B cell (primary cell): ENCODE measurements at regions of chr16 and their contacts with region 1.

Region 1: GRCh38 chr16:84617791-84618580 is at the start of gene COTL1:
- DNase-seq: peak; percentile 96
- ATAC-seq: peak; percentile 88
- H3K4me3 ChIP-seq: peak within 1 kb of the TSS; percentile 73 to 96 (median 85)
- H3K4me3 Mint-ChIP-seq: peak within 1 kb of the TSS; percentile 88
- H3K27ac ChIP-seq: peak within 1 kb of the TSS; percentile 4 to 72
- H3K27ac Mint-ChIP-seq: peak within 1 kb of the TSS; percentile 90
- H3K4me1 ChIP-seq: peaks cover 51 to 67% of the 10 kb centered on the region in 2 donors
- H3K4me1 Mint-ChIP-seq: peaks cover 72% of the 10 kb centered on the region
- H3K27me3 ChIP-seq: no peaks in the 10 kb centered on the region
- H3K27me3 Mint-ChIP-seq: no peaks in the 10 kb centered on the region
- CTCF ChIP-seq: no peak
- total RNA-seq, gene COTL1: 245 and 264 TPM in 2 replicates

Region 2: DNA sequence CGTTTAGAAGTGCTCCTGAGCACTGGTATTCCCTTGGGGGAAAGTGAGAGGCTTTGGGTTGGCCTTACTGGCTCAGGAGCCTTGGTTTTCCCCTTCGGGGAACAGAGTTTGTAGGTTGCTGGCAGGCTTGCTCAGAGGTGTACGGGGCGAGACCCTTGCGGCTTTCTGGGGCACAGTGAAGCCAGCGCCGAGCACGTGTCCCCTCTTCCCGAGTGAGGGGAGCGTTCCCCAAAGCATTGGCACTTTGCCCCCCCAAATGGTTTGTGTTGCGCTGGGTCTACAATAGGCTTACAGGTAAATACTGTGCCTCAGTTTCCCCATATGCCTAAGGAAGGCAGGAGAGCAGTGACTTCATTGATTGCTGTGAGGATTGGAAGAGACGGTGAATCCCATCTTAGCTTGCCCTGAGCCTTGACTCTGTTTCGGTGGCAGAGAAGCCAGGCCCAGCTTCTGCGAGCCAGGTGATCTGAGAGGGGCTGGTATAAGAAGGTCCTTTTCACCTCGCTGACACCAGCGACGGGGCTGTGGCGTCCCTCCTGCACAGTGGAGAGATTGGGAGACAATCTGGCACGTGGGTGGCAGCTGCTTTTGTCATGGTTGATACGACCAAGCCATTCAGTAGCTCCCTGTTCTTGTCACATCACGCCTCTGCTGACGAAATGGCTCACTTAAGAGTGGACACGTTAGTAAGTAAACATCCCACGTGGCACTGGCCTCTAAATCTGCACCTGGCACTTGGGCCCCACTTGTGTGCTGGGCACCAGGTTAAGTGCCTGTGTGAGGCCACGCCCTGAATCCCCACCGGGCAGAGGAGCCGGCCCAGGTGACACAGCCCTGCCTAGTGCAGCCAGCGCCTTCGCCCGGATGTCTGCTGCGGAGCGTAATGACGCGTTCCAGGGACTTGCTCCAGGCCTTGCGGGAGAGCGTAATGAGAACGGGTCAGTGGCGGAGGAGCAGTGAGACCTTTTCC is 168.5 kb before region 1 on chr16:
- CTCF ChIA-PET with region 1: no interaction called
- POLR2A ChIA-PET with region 1: no interaction called
- intact Hi-C with region 1: no loop called
- DNase-seq: no peak
- ATAC-seq: no peak
- H3K4me3 ChIP-seq: no peak overlapping the region
- H3K4me3 Mint-ChIP-seq: no peak overlapping the region
- H3K27ac ChIP-seq: no peak overlapping the region
- H3K27ac Mint-ChIP-seq: no peak overlapping the region
- H3K4me1 ChIP-seq: no peaks in the 10 kb centered on the region
- H3K4me1 Mint-ChIP-seq: no peaks in the 10 kb centered on the region
- H3K27me3 ChIP-seq: peaks cover 0 to 7% (median 1%) of the 10 kb centered on the region in 4 experiments
- H3K27me3 Mint-ChIP-seq: peaks cover 11% of the 10 kb centered on the region
- CTCF ChIP-seq: no peak

Region 3: GRCh38 chr16:84526794-84527503 is 91.0 kb before region 1 on chr16:
- CTCF ChIA-PET with region 1: interaction called, 17 read pairs
- POLR2A ChIA-PET with region 1: no interaction called
- intact Hi-C with region 1: no loop called
- DNase-seq: no peak
- ATAC-seq: no peak
- H3K4me3 ChIP-seq: no peak overlapping the region
- H3K4me3 Mint-ChIP-seq: no peak overlapping the region
- H3K27ac ChIP-seq: no peak overlapping the region
- H3K27ac Mint-ChIP-seq: no peak overlapping the region
- H3K4me1 ChIP-seq: peaks cover under 1 to 4% of the 10 kb centered on the region in 2 donors
- H3K4me1 Mint-ChIP-seq: peaks cover 3% of the 10 kb centered on the region
- H3K27me3 ChIP-seq: peaks cover 0 to 2% (median 0%) of the 10 kb centered on the region in 4 experiments
- H3K27me3 Mint-ChIP-seq: no peaks in the 10 kb centered on the region
- CTCF ChIP-seq: no peak

Region 4: GRCh38 chr16:84593825-84594724 is 23.9 kb before region 1 on chr16:
- CTCF ChIA-PET with region 1: interaction called, 42 read pairs
- POLR2A ChIA-PET with region 1: interaction called, 14 read pairs
- intact Hi-C with region 1: loop called (anchors 1 kb)
- DNase-seq: peak; percentile 94
- ATAC-seq: peak; percentile 85
- H3K4me3 ChIP-seq: peak overlapping the region; percentile 41 to 69 (median 52)
- H3K4me3 Mint-ChIP-seq: peak overlapping the region; percentile 92
- H3K27ac ChIP-seq: peak overlapping the region; percentile 91 to 94
- H3K27ac Mint-ChIP-seq: peak overlapping the region; percentile 94
- H3K4me1 ChIP-seq: peaks cover 62 to 87% of the 10 kb centered on the region in 2 donors
- H3K4me1 Mint-ChIP-seq: peaks cover 72% of the 10 kb centered on the region
- H3K27me3 ChIP-seq: no peaks in the 10 kb centered on the region
- H3K27me3 Mint-ChIP-seq: no peaks in the 10 kb centered on the region
- CTCF ChIP-seq: no peak

Region 5: DNA sequence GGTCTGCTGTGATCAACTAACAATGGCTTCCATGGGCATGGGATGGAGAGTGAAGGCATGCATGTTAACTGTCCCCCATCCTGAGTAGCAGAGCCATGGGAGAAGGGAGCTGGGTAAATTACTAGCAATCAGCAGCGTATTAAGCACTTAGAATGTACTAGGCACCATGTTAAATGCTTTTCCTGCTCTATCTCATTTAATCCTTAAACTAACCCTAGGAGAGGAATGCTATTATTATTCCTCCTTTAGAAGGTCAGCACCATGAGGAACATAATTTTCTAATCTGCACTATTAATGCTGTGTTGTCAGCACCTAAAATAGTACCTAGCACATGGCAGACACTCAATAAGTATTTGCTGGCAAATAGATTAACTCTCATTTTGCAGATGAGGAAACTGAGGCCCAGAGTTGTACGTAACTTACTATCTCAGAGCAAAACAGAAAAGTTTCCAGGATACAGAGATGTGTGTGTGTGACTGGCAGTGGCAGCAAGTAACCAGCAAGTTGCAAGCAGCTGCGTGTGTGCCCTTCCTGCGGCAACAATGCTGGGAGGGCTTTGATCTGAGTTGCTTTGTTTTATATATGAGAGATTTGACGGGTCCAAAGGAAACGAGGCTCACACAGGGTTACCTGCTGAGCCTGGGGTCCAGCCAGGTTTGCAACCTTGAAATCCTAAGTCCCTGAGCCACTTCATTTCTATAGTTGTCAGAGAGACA is 23.8 kb after region 1 on chr16:
- CTCF ChIA-PET with region 1: interaction called, 34 read pairs
- POLR2A ChIA-PET with region 1: interaction called, 3 read pairs
- intact Hi-C with region 1: loop called (anchors 1 kb)
- DNase-seq: no peak
- ATAC-seq: no peak
- H3K4me3 ChIP-seq: peak overlapping the region in 1 of 5 experiments; percentile 38
- H3K4me3 Mint-ChIP-seq: peak overlapping the region; percentile 81
- H3K27ac ChIP-seq: peak overlapping the region; percentile 74 to 75
- H3K27ac Mint-ChIP-seq: peak overlapping the region; percentile 96
- H3K4me1 ChIP-seq: peaks cover 54 to 76% of the 10 kb centered on the region in 2 donors
- H3K4me1 Mint-ChIP-seq: peaks cover 78% of the 10 kb centered on the region
- H3K27me3 ChIP-seq: no peaks in the 10 kb centered on the region
- H3K27me3 Mint-ChIP-seq: no peaks in the 10 kb centered on the region
- CTCF ChIP-seq: no peak

Region 6: GRCh38 chr16:84699712-84700445 is 81.9 kb after region 1 on chr16 and contains the start of gene USP10:
- CTCF ChIA-PET with region 1: interaction called, 13 read pairs
- POLR2A ChIA-PET with region 1: no interaction called
- intact Hi-C with region 1: no loop called
- DNase-seq: peak; percentile 94
- ATAC-seq: peak; percentile 78
- H3K4me3 ChIP-seq: peak within 1 kb of the TSS; percentile 71 to 88 (median 80)
- H3K4me3 Mint-ChIP-seq: peak within 1 kb of the TSS; percentile 99
- H3K27ac ChIP-seq: peak within 1 kb of the TSS; percentile 69 to 91
- H3K27ac Mint-ChIP-seq: peak within 1 kb of the TSS; percentile 98
- H3K4me1 ChIP-seq: peaks cover 13 to 37% of the 10 kb centered on the region in 2 donors
- H3K4me1 Mint-ChIP-seq: peaks cover 41% of the 10 kb centered on the region
- H3K27me3 ChIP-seq: no peaks in the 10 kb centered on the region
- H3K27me3 Mint-ChIP-seq: no peaks in the 10 kb centered on the region
- CTCF ChIP-seq: no peak
- total RNA-seq, gene USP10: 130 and 134 TPM in 2 replicates

Region 7: GRCh38 chr16:84754353-84754856 is 136.4 kb after region 1 on chr16:
- CTCF ChIA-PET with region 1: interaction called, 34 read pairs
- POLR2A ChIA-PET with region 1: no interaction called
- intact Hi-C with region 1: no loop called
- DNase-seq: peak; percentile 89
- ATAC-seq: peak; percentile 88
- H3K4me3 ChIP-seq: peak overlapping the region in 1 of 5 experiments; percentile 21
- H3K4me3 Mint-ChIP-seq: peak overlapping the region; percentile 12
- H3K27ac ChIP-seq: no peak overlapping the region
- H3K27ac Mint-ChIP-seq: peak overlapping the region; percentile 57
- H3K4me1 ChIP-seq: peaks cover 44 to 47% of the 10 kb centered on the region in 2 donors
- H3K4me1 Mint-ChIP-seq: peaks cover 72% of the 10 kb centered on the region
- H3K27me3 ChIP-seq: no peaks in the 10 kb centered on the region
- H3K27me3 Mint-ChIP-seq: no peaks in the 10 kb centered on the region
- CTCF ChIP-seq: peak; percentile 91